A549 (cell line): ENCODE measurements at regions of chr14 and their contacts with region 1.

Region 1: GRCh38 chr14:53306267-53306721 is 153.2 kb upstream of the DDHD1 start:
- DNase-seq: peak; percentile 47
- ATAC-seq: peak; percentile 70 to 88; a peak in 5 of 6 replicates
- H3K4me3 ChIP-seq: peak overlapping the region; percentile 29
- H3K27ac ChIP-seq: no peak overlapping the region
- H3K4me1 ChIP-seq: no peaks in the 10 kb centered on the region
- CTCF ChIP-seq: peak; percentile 87
- EP300 ChIP-seq: no peak
- POLR2A ChIP-seq: no peak
- RAD21 ChIP-seq: peak; percentile 89 to 92

Region 2: GRCh38 chr14:53126731-53127130 is 179.6 kb before region 1 on chr14:
- CTCF ChIA-PET with region 1: no interaction called
- POLR2A ChIA-PET with region 1: no interaction called
- DNase-seq: no peak
- ATAC-seq: no peak
- H3K4me3 ChIP-seq: no peak overlapping the region
- H3K27ac ChIP-seq: no peak overlapping the region
- H3K4me1 ChIP-seq: peaks cover 3% of the 10 kb centered on the region; the same call in 1 of the 3 replicates
- CTCF ChIP-seq: no peak
- EP300 ChIP-seq: no peak
- POLR2A ChIP-seq: no peak
- RAD21 ChIP-seq: no peak

Region 3: GRCh38 chr14:53285805-53286204 is 20.5 kb before region 1 on chr14:
- CTCF ChIA-PET with region 1: no interaction called
- POLR2A ChIA-PET with region 1: no interaction called
- DNase-seq: peak in 1 of 2 experiments; percentile 22
- ATAC-seq: peak in 1 of 2 experiments; percentile 36; a peak in 1 of 6 replicates
- H3K4me3 ChIP-seq: no peak overlapping the region
- H3K27ac ChIP-seq: no peak overlapping the region
- H3K4me1 ChIP-seq: no peaks in the 10 kb centered on the region
- CTCF ChIP-seq: no peak
- EP300 ChIP-seq: no peak
- POLR2A ChIP-seq: no peak
- RAD21 ChIP-seq: no peak

Region 4: DNA sequence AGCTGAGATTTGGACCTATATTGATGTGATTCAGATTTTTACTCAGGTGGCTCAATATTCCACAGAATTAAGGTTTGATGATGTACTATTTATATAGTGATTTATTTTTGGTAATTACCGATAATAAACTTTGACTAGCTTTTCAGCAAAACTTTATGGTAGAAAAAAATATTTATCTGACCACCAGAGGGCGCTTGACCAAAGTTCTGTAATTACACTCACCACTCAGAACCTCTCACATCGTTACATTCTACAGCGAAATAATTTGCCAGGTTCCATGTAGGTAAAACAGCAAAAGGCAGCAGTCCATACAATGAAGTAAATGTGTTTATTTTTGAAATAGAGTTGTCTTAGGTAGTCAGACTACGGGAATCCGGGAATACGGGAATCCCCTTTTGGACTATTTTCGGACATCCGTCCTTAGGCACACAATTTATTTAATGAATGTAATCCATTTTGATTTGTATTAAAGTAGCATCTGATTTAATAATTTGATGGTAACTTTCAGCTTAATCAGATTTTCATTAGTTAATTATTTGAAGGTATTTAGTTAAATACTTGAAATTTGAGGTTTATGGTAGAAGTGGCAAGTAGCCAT is 10.2 kb before region 1 on chr14:
- CTCF ChIA-PET with region 1: interaction called, 77 read pairs
- POLR2A ChIA-PET with region 1: no interaction called
- DNase-seq: peak; percentile 9 to 39
- ATAC-seq: peak in 1 of 2 experiments; percentile 50; a peak in 1 of 6 replicates
- H3K4me3 ChIP-seq: no peak overlapping the region
- H3K27ac ChIP-seq: no peak overlapping the region
- H3K4me1 ChIP-seq: no peaks in the 10 kb centered on the region
- CTCF ChIP-seq: peak; percentile 85
- EP300 ChIP-seq: no peak
- POLR2A ChIP-seq: no peak
- RAD21 ChIP-seq: peak; percentile 30 to 44; a peak in 4 of 5 replicates

Region 5: DNA sequence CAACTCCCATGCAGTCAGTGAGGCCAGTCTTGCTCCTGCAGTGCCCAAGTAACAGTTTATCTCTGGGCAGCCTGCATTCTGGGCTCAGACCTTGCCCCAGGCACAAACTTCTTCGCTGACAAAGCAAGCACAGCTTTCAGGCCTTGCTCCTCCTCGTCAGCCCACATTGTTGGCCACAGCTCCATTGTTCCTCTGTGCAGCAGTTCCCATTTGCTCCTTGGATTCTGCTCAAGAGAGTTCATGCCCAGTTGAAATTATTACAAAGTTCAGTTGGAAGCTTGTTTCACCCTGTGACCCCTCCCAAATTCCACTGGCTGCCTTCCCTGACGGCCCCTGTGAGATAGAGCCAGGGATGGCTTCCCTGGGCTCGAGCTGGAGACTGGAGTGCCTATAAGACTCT is 10.2 kb after region 1 on chr14:
- CTCF ChIA-PET with region 1: interaction called, 35 read pairs
- POLR2A ChIA-PET with region 1: no interaction called
- DNase-seq: no peak
- ATAC-seq: no peak
- H3K4me3 ChIP-seq: no peak overlapping the region
- H3K27ac ChIP-seq: no peak overlapping the region
- H3K4me1 ChIP-seq: no peaks in the 10 kb centered on the region
- CTCF ChIP-seq: no peak
- EP300 ChIP-seq: no peak
- POLR2A ChIP-seq: no peak
- RAD21 ChIP-seq: no peak

Region 6: GRCh38 chr14:53327716-53328115 is 21.4 kb after region 1 on chr14:
- CTCF ChIA-PET with region 1: interaction called, 12 read pairs
- POLR2A ChIA-PET with region 1: no interaction called
- DNase-seq: no peak
- ATAC-seq: no peak
- H3K4me3 ChIP-seq: no peak overlapping the region
- H3K27ac ChIP-seq: no peak overlapping the region
- H3K4me1 ChIP-seq: no peaks in the 10 kb centered on the region
- CTCF ChIP-seq: no peak
- EP300 ChIP-seq: no peak
- POLR2A ChIP-seq: no peak
- RAD21 ChIP-seq: no peak